ENCODE measurements at regions of chr3 and their contacts with region 1.

Region 1: DNA sequence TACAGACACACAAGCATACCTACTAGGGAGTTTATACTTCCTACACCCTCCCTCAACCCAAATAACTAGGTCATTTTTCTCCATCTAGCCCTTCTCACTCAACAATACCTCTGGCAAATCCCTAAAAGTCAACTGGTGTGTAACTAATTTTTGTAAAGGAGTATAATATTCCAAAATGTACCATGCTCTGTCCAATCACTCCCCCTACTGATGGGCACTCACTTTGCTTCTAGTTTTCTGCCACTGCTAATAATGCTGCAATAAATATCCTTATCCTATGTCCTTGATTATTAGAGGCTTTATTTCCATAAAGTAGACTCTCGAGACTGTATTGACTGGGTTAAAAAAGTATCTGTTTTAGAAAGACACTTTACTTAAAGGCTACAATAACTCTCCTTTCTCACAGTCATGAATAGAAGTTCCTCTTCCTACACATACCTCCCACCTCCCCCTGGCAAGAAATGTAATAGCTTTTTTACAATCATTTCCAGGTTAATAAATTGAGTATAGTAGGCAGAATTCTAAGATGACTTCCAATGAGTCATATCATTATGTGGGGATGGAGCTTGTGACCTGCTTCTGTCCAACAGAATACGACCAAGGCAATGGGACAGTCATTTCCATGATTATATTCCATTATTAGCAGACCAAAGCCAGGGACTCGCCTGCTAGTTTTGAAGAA is 30.0 kb downstream of the SHQ1 start:
- DNase-seq: no peak
- H3K4me3 ChIP-seq: no peak overlapping the region
- H3K27ac ChIP-seq: no peak overlapping the region
- H3K4me1 ChIP-seq: peaks cover 47% of the 10 kb centered on the region
- H3K27me3 ChIP-seq: no peaks in the 10 kb centered on the region
- CTCF ChIP-seq: peak; percentile 62

Region 2: GRCh38 chr3:71710906-71711494 is 1107.2 kb before region 1 on chr3:
- intact Hi-C with region 1: loop called (anchors 10 kb)
- DNase-seq: no peak
- H3K4me3 ChIP-seq: no peak overlapping the region
- H3K27ac ChIP-seq: no peak overlapping the region
- H3K4me1 ChIP-seq: peaks cover 25% of the 10 kb centered on the region
- H3K27me3 ChIP-seq: no peaks in the 10 kb centered on the region
- CTCF ChIP-seq: peak; percentile 68

Region 3: DNA sequence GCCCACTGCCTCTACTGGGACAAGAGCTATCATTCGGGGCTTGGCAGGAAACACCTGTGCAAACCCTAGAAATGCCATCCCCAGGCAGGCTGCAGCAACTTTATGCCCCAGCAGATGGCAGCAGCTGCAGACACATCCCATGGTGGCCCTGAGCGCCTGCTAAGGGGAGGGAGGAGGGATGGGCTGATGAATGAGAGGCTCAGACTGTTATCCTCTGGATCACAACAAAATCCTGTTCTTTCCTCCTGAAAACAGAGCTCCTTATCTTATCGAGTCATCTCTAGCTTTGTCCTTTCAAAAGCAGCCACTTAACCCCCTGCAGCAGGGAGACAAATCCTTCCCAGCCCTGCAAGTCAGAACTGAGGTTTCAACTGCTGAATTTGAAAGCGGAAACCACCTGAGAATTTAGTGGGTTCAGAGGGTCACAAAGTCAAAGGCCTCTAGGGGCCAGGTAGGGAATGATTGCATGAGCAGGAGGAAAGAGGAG is 942.7 kb before region 1 on chr3:
- intact Hi-C with region 1: loop called (anchors 10 kb)
- DNase-seq: peak; percentile 70
- H3K4me3 ChIP-seq: no peak overlapping the region
- H3K27ac ChIP-seq: no peak overlapping the region
- H3K4me1 ChIP-seq: peaks cover 4% of the 10 kb centered on the region
- H3K27me3 ChIP-seq: peaks cover 37% of the 10 kb centered on the region
- CTCF ChIP-seq: peak; percentile 91

Region 4: GRCh38 chr3:71955240-71956068 is 862.8 kb before region 1 on chr3:
- intact Hi-C with region 1: loop called (anchors 10 kb)
- DNase-seq: peak; percentile 61
- H3K4me3 ChIP-seq: no peak overlapping the region
- H3K27ac ChIP-seq: no peak overlapping the region
- H3K4me1 ChIP-seq: peaks cover 10% of the 10 kb centered on the region
- H3K27me3 ChIP-seq: peaks cover 3% of the 10 kb centered on the region
- CTCF ChIP-seq: peak; percentile 79

Region 5: DNA sequence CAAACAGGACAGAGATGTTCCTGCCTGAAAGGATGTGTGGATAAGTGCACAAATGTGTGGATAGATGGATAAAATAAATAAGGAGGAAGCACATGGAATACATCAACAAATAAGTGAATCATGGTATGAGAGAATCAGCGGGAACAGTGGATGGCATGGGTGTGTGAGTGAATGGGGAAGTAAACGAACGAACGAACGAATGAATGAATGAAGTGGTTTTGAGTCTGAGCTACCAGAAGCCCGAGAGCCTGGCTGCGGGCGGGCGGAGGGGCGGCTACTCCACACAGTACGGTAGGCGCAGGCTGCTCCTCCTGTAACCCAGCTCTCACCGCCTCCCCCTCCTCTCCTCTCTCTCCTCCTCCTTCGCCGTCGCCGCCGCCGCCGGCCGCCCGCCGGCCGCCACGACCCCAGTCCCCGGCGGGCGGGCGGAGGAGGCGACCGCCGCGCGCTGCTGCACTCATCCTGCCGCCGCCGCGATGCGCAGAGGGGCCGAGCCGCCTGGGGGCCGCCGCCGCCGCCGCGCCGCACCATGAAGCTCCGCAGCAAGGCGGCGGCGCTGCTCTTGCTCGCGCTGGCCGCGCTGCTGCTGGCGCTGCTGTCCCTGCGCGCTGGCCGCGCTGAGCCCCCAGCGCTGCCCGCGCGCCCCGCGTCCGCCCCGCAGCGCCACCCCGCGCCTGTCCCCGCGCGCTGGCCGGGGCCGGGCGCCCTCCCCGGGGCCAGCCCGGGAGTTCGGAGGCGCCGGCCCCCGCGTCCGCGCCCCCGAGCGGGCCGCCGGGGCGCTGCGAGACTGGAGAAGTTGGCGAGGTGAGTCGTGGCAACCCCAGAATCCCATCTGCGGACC is 69.7 kb after region 1 on chr3 and contains the start of gene GXYLT2:
- intact Hi-C with region 1: no loop called
- DNase-seq: peak; percentile 78
- H3K4me3 ChIP-seq: peak within 1 kb of the TSS; percentile 66
- H3K27ac ChIP-seq: peak within 1 kb of the TSS; percentile 82
- H3K4me1 ChIP-seq: peaks cover 42% of the 10 kb centered on the region
- H3K27me3 ChIP-seq: peaks cover 6% of the 10 kb centered on the region
- CTCF ChIP-seq: peak; percentile 17
- total RNA-seq, gene GXYLT2: 16.2 TPM

Measured in left ventricle myocardium inferior (tissue), 1 donor.